ENCODE measurements at regions of chr14 and their contacts with region 1.

Region 1: GRCh38 chr14:80638620-80639515 is 302.7 kb downstream of the CEP128 start:
- DNase-seq: peak; percentile 96
- ATAC-seq: peak; percentile 98
- H3K4me3 ChIP-seq: 0 out of 2 replicates have a peak overlapping the region, but pooled peaks have one; percentile 2
- H3K27ac ChIP-seq: peak overlapping the region; percentile 87
- H3K4me1 ChIP-seq: peaks cover 46% of the 10 kb centered on the region
- H3K27me3 ChIP-seq: no peaks in the 10 kb centered on the region
- CTCF ChIP-seq: no peak

Region 2: DNA sequence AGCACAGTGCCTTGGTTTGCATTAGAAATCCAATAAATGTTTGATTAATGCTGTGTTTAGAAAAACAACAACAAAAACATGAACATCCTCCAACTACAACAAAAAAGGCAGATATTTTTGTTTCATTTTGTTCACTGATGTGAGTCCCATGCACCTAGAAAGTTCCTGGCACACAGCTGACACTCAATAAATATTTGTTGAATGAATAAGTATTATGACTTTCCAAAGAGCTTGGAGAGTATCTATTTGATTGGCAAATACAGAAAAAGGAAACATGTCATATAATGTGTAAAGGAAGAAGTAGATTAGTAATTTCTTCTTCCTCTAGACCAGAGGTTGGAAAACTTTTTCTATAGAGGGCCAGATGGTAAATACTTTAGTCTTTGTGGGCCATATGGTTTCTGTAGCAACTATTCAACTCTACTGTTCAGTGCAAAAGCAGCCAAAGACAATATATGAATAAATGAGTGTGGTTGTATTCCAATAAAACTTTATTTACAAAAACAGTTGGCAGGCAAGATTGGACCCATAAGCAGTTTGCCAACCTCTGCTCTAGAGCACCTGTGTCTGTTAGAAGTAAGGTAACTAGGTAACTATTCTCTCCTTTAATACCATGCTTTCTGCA is 115.2 kb before region 1 on chr14:
- CTCF ChIA-PET with region 1: no interaction called
- POLR2A ChIA-PET with region 1: no interaction called
- intact Hi-C with region 1: loop called (anchors 1 kb)
- DNase-seq: peak; percentile 87
- ATAC-seq: peak; percentile 86
- H3K4me3 ChIP-seq: peak overlapping the region; percentile 20; the same call in 1 of the 2 replicates
- H3K27ac ChIP-seq: peak overlapping the region; percentile 76
- H3K4me1 ChIP-seq: peaks cover 29% of the 10 kb centered on the region
- H3K27me3 ChIP-seq: no peaks in the 10 kb centered on the region
- CTCF ChIP-seq: no peak

Region 3: DNA sequence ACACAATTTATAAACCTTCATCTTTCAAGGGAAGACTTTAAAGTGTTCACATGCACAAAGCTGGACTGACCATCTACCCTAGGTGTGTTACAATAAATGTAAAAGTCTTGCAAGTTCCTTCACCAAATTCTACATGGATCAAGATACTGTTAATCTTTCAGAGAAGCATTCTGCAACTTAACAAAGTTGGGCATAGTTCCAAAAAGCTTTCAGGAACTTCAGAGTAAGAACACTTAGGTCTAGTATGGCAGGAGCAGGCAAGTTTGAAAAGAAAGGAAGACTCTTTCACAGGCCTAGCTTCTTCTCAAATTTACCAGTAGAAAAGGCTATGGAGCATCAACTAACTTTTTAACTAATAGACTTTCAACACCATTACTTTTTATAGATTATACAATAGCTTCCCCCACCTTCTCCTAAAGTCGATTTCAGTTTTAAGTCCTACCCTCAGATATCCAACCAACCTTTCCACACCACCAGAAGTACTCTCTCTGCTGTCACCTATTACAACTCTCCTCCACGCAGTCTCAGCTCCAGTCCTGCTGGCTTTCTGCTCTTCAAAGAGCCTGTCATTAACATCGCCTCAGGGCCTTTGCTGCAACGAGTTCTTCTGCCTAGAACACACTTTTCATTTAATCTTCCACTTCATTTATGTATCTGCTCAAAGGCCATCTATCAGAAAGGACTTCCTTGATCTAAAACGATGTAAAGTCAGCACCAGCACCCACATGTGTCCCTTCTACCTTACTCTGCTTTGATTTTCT is 31.3 kb before region 1 on chr14:
- CTCF ChIA-PET with region 1: no interaction called
- POLR2A ChIA-PET with region 1: interaction called, 3 read pairs
- intact Hi-C with region 1: loop called (anchors 2 kb)
- DNase-seq: no peak
- ATAC-seq: no peak
- H3K4me3 ChIP-seq: no peak overlapping the region
- H3K27ac ChIP-seq: no peak overlapping the region
- H3K4me1 ChIP-seq: peaks cover 23% of the 10 kb centered on the region
- H3K27me3 ChIP-seq: no peaks in the 10 kb centered on the region
- CTCF ChIP-seq: no peak

Region 4: DNA sequence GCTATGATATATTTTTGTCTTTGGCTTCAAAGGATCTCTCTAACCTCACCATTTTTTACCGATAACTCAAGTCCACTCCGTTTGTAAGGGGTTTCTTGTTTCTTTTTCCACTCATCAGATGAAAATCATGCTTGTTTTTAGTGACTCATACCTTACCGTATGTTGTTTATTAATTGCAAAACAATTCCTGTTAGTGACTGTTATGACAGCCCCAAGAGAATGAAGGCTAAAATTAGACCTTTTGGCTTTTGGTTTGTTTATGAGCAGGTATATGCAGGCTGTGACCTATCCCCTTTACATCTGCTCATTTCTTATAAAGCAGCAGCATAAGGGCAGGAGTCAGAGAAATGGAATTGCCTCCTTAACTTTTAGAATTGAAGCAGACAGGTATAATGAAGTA is 17.2 kb before region 1 on chr14:
- CTCF ChIA-PET with region 1: no interaction called
- POLR2A ChIA-PET with region 1: no interaction called
- intact Hi-C with region 1: loop called (anchors 1 kb)
- DNase-seq: peak; percentile 84
- ATAC-seq: peak; percentile 87
- H3K4me3 ChIP-seq: peak overlapping the region; percentile 15; the same call in 1 of the 2 replicates
- H3K27ac ChIP-seq: peak overlapping the region; percentile 54
- H3K4me1 ChIP-seq: peaks cover 18% of the 10 kb centered on the region
- H3K27me3 ChIP-seq: no peaks in the 10 kb centered on the region
- CTCF ChIP-seq: no peak

Region 5: DNA sequence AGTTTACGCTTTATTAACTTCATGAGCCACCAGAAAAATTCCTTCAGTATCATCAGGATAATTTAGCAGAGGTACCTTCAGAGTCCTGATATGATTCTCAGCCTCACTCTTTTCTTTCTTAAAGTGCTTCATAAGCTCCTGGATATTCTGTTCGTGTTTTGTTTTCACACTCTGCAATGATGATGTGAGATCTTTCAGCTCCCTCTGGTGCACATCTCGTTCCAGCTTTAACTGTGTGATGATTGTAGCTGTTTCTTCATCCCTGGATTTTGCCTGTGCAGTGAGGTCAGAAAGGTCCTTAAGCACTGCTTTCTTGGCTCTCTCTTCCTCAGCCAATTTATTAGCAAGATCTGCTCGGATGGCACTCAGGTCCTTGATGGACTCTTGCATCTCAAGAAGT is 146.0 kb after region 1 on chr14:
- CTCF ChIA-PET with region 1: no interaction called
- POLR2A ChIA-PET with region 1: no interaction called
- intact Hi-C with region 1: no loop called
- DNase-seq: no peak
- ATAC-seq: 0 out of 2 replicates have a peak, but pooled peaks have one; percentile 15
- H3K4me3 ChIP-seq: no peak overlapping the region
- H3K27ac ChIP-seq: no peak overlapping the region
- H3K4me1 ChIP-seq: no peaks in the 10 kb centered on the region
- H3K27me3 ChIP-seq: no peaks in the 10 kb centered on the region
- CTCF ChIP-seq: no peak

Measured in PC-3 (cell line).